Pancreas (tissue), 10 donors: ENCODE measurements at regions of chr5 and their contacts with region 1.

Region 1: DNA sequence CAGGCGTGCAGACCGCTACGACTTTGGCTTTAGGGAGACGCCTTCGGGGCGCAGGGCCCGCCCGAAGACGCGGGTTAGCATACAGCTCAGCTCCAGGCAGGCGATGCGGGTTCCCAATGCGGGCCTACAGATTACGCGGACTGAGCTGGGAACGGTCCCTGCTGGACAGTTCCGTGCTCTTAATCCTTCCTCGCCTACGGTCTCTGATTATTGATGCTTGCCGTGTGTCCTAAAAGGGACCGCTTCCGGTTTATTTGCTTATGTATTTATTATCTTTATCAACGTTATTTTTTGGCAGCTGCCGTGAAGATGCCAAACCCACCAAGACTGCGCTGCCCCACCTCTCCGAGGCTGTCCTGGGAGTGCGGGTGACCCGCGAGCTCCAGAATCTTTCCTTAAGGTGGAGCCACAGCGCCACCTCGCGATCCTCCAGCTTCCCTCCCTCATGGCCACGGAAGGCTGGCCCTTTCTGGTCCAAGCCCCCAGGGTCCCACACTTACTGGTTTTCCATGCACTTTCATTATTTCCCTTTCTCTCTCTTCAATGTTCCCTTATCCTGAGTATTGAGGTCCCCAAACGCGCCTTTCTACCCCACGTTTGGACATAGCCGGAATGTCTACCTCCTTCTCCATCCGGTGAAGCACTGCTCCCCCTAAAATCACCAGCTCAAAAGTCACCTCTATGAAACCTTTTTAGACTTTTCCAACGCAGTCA is 7.0 kb upstream of the EBF1 start:
- DNase-seq: peak; percentile 44 to 87 (median 64)
- ATAC-seq: peak; percentile 82 to 93 (median 92)
- H3K4me3 ChIP-seq: peak overlapping the region in 1 of 4 donors; percentile 21
- H3K27ac ChIP-seq: no peak overlapping the region
- H3K4me1 ChIP-seq: no peaks in the 10 kb centered on the region
- H3K27me3 ChIP-seq: peaks cover 0 to 6% (median 0%) of the 10 kb centered on the region in 4 donors
- CTCF ChIP-seq: peak; percentile 64 to 88 (median 86)

Region 2: GRCh38 chr5:158074992-158075769 is 1031.5 kb before region 1 on chr5:
- intact Hi-C with region 1: loop called in 1 of 3 experiments (anchors 10 kb)
- DNase-seq: peak; percentile 50 to 67 (median 62)
- ATAC-seq: peak; percentile 92 to 99 (median 98)
- H3K4me3 ChIP-seq: peak overlapping the region in 2 of 4 donors; percentile 1 to 26
- H3K27ac ChIP-seq: peak overlapping the region in 3 of 4 donors; percentile 48 to 68 (median 56)
- H3K4me1 ChIP-seq: no peaks in the 10 kb centered on the region
- H3K27me3 ChIP-seq: no peaks in the 10 kb centered on the region
- CTCF ChIP-seq: peak; percentile 57 to 79 (median 76)

Region 3: DNA sequence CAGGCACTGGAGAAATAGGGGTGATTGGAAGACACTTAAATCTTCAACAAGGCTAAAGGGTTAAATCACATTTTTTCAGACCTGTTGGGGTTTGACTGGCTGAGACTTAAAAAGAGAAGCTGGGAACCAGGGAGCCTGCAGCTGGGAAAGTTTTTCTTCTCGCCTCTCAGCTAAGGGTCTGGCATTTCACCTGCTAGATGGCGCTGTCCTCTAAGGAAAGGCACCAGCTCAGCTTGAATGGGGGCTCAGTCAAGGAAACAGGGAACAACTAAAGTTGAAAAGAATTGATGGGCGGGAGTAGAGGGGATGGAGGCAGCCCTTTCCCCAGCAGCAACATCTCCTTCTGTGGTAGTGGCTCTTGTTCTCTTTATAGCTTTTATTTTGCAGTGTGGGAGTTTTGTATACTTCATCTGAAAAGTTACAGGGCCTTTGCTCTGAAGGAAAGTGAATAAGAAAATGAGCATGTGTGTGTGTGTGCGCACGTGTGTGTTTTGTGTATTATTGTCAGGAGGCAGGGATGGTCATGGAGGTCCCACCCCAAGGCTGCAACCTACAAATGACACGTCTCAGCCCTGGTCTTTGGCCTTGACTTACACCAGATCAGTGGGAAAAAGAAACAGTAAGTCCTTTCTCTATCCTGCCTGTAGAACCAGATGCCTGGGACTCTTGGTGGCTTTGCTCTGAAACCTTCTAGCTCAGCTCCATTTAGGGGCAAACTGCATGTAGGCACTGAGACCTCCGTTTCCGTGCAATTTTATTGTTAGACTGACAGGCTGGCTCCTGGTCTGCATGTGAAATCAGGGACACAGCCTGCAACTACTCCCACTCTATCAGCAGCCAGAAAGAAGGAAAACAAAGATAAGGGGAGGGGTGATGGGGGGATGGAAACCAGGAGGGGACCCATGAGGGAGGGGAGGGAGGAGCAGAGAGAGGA is 931.5 kb before region 1 on chr5:
- intact Hi-C with region 1: loop called in 2 of 3 experiments (anchors 5 to 10 kb)
- DNase-seq: peak in 5 of 6 donors; percentile 47 to 73 (median 65)
- ATAC-seq: peak; percentile 63 to 95 (median 90)
- H3K4me3 ChIP-seq: no peak overlapping the region
- H3K27ac ChIP-seq: no peak overlapping the region
- H3K4me1 ChIP-seq: no peaks in the 10 kb centered on the region
- H3K27me3 ChIP-seq: no peaks in the 10 kb centered on the region
- CTCF ChIP-seq: peak; percentile 38 to 74 (median 57)

Region 4: DNA sequence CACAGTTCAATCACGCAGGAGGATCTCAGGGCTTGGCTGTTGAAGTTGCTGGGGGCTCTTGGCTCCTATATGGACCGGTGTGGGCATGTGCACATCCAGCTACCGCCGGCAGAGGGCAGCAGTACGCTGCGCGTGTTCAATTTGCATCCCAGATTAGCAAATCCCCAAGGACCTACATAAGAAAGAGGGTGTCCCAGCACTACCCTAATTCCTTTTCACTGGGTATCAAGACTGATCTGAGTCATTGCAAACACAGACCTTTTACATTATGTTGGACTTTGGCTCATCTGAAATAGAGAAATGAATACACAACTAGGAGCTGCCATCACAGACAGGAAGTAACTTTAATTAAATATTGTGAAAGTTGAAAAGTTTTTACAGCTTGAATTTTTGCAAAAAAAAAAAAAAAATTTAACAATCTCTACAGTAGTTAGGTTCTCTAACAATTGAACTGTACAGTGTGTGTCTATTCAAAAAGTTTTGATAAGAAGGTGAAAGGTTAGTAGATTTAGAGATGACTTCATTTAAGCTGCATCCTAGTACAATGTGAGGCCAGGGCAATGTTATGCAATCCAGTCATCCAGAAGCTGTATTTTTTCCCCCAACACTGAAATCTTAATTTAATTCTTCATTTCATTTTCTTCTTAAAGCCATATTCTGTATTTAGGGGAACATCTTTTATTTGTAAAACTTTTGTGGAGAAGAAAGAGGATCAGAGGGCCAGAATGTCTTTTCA is 411.0 kb before region 1 on chr5:
- intact Hi-C with region 1: loop called (anchors 5 kb)
- DNase-seq: peak; percentile 37 to 88 (median 66)
- ATAC-seq: peak; percentile 60 to 94 (median 92)
- H3K4me3 ChIP-seq: no peak overlapping the region
- H3K27ac ChIP-seq: no peak overlapping the region
- H3K4me1 ChIP-seq: peaks cover 0 to 9% (median 0%) of the 10 kb centered on the region in 3 donors
- H3K27me3 ChIP-seq: peaks cover 0 to 13% (median 6%) of the 10 kb centered on the region in 4 donors
- CTCF ChIP-seq: peak; percentile 87 to 98 (median 90)